Aorta (tissue), 5 donors: ENCODE measurements at regions of chr2 and their contacts with region 1.

Region 1: DNA sequence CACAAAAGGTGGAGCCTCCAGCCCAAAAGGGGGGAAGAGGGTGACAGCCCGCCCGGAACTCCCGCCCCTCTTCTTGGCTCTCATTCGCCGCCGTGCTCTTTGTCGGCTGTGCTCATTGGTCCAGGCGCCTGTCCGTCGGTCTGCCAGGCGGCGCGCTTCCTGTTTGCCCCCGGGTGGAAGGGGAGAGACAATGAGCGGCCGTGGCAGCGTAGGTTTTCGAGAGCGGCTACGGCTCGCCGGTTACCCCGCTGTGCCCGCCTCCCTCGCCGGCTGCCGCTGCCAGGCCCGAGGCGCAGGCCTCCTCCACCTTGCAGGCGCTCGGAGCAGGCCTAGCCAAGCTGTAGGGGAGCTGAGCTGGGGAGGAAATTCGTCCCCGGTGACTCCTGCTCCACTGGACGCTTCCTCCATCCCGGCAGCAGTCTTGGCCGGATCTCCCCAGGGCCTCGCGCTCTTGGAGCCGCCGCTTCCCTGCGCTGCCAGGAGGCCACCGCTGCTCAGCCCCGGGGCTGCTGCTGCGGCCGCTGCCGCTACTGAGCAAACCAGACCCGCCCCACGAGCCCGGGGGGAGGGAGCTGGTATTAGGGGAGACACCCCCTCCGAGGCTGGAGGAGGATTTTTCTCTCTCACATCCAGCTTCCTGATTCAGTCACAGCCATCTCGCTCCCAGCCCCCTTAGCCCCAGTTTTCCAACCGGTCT is at the start of gene SP3:
- DNase-seq: peak; percentile 99
- ATAC-seq: peak; percentile 95
- H3K4me3 ChIP-seq: peak within 1 kb of the TSS; percentile 100
- H3K27ac ChIP-seq: peak within 1 kb of the TSS; percentile 98 to 99
- H3K4me1 ChIP-seq: peaks cover 0 to 3% of the 10 kb centered on the region in 2 donors
- H3K27me3 ChIP-seq: no peaks in the 10 kb centered on the region
- total RNA-seq, gene SP3: 79.1 to 97.6 TPM

Region 2: DNA sequence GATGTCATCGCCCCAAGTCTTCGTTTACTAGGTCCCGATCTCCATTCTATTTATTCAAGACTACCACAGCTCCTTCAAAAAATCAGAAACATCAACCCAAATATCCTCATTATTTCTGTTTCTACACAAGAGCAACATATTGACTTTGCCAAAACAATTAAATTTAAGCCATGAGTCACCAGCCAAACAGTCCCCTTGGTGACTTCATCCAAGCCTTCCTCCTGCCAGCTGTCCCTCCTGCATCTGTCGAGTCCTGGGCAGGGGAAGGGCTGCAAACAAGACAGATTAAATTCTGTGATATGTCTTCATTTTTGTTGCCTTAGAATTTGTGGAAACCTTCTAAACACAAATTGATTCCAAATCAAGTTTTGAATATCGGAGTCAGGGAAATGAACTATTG is 110.6 kb before region 1 on chr2:
- intact Hi-C with region 1: loop called in 1 of 2 experiments (anchors 5 kb)
- DNase-seq: peak in 1 of 2 donors; percentile 67
- ATAC-seq: peak; percentile 80
- H3K4me3 ChIP-seq: no peak overlapping the region
- H3K27ac ChIP-seq: peak overlapping the region; percentile 25 to 93
- H3K4me1 ChIP-seq: peaks cover 0 to 2% of the 10 kb centered on the region in 2 donors
- H3K27me3 ChIP-seq: peaks cover 0 to 1% of the 10 kb centered on the region in 2 donors

Region 3: DNA sequence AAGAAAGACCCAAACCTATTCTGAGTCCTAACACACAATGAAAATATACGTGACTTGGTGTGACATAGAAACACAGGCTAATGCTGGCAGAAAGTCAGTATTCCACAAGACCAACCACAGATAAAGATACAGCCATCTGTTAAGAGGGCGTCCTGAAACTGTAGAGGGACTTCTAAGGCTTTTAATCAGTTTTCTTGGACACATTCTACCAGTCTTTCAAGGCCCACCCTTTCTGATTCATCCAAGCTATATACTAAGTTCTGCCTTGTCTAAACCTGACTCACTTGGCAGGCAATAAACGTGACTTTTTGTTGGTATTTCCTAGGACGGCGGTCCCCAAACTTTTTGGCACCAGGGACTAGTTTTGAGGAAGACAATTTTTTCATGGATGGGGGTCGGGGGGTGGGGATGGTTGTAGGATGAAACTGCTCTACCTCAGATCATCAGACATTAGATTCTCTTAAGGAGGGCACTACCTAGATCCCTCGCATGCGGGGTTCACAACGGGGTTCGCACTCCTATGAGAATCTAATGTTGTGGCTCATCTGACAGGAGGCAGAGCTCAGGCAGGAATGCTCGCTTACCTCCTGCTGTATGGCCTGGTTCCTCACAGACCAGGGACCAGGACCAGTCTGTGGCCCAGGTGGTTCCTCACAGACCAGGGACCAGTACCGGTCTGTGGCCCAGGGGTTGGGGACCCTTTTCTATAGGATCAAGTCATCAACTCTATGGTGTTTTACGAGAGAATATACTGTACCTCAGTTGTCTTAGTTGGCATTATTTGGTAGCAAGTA is 61.7 kb before region 1 on chr2:
- intact Hi-C with region 1: no loop called
- DNase-seq: no peak
- ATAC-seq: no peak
- H3K4me3 ChIP-seq: no peak overlapping the region
- H3K27ac ChIP-seq: no peak overlapping the region
- H3K4me1 ChIP-seq: no peaks in the 10 kb centered on the region
- H3K27me3 ChIP-seq: no peaks in the 10 kb centered on the region

Region 4: DNA sequence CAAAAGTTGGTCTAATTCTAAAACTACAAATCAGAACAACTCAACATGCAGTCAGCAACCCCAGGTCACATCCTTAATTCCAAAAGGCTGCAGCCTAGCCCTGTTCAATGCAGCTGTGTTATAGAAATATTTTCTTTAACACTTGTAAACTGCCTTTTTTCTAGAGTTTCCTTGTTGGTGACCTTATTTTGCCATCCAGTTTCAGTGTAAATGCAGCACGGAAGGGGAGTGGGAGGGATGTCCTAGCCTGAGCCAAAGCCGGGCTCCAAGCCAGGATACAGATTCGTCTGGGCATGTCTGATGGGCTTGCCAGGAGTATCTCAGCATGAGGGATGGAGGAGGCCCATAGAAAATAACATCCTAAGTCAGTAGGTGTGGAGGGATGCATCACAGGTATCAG is 17.4 kb after region 1 on chr2:
- intact Hi-C with region 1: loop called in 1 of 2 experiments (anchors 1 kb)
- DNase-seq: peak in 1 of 2 donors; percentile 61
- ATAC-seq: peak; percentile 9
- H3K4me3 ChIP-seq: no peak overlapping the region
- H3K27ac ChIP-seq: peak overlapping the region; percentile 84 to 90
- H3K4me1 ChIP-seq: peaks cover 2 to 11% of the 10 kb centered on the region in 2 donors
- H3K27me3 ChIP-seq: no peaks in the 10 kb centered on the region

Region 5: DNA sequence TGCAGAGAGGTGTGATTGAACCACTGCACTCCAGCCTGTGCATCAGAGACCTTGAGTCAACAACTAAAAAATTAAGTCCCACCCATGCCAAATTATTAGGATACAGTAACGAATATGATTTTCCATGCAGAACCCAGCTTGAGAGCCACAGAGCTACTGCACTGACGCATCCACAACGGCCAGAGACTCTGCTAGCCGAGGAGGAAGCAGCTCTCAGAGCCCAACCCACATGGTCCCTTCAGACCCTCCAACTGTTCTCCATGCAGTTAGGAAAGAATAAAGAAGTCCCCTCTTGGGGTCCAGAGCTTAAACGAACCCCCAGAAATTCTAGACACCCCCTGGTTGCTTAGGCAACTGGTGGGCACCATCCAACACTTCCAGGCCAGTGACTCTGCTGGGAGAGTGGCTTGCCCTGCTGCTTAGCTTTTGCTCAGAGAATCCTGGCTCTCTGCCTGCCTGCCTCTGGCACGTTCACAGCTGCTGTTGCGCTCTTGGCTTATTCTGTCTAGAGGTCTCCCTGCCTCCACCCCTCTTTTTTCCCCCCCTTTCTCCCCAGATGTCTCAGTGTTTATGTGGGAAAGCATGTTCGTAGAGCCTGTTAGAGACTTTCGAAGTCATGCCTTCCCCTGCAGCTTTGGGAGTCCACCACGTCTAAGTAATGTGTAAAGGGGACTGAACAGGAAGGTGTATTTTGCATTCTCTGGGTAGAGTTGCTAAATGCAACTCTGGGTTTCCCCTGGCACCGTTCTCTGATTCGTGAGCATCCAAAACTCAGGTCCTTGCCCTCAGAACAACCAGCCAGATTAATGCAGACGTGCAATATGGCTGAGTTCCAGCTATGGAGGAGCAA is 25.7 kb after region 1 on chr2:
- intact Hi-C with region 1: loop called in 1 of 2 experiments (anchors 1 kb)
- DNase-seq: peak; percentile 93 to 94
- ATAC-seq: peak; percentile 87
- H3K4me3 ChIP-seq: no peak overlapping the region
- H3K27ac ChIP-seq: peak overlapping the region in 1 of 2 donors; percentile 55
- H3K4me1 ChIP-seq: peaks cover 4 to 18% of the 10 kb centered on the region in 2 donors
- H3K27me3 ChIP-seq: no peaks in the 10 kb centered on the region

Region 6: DNA sequence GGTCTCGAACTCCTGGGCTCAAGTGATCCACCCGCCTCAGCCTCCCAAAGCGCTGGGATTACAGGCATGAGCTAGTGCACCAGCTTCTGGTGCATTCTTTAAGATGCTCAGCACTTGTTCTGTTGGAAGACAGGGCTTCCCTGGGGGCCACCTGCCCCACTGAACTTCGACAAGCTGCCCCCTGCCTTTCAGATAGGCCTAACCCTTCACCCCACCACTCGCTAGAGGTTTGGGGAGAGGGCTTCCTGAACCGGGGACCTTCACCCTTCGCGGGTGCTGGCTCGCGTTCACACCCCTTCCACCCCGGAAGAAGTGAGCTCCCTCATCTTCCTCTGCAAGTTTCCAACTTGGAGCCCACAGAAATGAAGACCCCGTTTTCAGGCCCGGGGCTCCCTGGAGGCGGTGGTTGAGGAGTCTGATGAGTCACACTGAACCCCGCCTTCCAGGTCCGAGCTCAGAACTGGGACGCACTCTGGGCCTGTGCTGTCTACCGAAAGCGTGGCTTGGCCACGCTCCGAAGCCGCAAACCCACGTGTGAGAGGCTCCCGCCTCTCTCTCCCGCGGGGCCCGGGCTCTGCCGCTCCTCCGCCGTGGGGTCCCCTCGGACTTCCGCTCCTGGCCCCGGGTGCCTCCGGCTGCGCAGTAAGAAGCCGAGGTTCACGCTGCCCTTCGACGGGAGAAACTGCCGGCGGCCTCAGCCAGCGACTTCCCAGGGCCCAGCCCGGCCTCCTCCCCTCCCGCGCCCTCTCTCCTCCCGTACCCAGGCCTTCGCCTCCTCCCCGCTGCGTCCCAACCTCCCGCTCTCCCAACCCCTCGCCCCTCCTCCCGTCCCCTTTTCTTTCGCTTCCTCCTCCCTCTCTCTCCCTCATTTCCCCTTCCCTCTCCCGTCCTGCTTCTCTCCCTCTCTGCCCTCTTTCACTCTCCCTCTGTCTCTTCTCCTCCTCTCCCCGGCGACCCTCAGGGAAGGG is 47.2 kb after region 1 on chr2:
- intact Hi-C with region 1: no loop called
- DNase-seq: peak; percentile 89 to 91
- ATAC-seq: peak; percentile 94
- H3K4me3 ChIP-seq: peak overlapping the region; percentile 33 to 42
- H3K27ac ChIP-seq: peak overlapping the region; percentile 95 to 97
- H3K4me1 ChIP-seq: no peaks in the 10 kb centered on the region
- H3K27me3 ChIP-seq: no peaks in the 10 kb centered on the region